ENCODE measurements at regions of chr13 and their contacts with region 1.

Region 1: DNA sequence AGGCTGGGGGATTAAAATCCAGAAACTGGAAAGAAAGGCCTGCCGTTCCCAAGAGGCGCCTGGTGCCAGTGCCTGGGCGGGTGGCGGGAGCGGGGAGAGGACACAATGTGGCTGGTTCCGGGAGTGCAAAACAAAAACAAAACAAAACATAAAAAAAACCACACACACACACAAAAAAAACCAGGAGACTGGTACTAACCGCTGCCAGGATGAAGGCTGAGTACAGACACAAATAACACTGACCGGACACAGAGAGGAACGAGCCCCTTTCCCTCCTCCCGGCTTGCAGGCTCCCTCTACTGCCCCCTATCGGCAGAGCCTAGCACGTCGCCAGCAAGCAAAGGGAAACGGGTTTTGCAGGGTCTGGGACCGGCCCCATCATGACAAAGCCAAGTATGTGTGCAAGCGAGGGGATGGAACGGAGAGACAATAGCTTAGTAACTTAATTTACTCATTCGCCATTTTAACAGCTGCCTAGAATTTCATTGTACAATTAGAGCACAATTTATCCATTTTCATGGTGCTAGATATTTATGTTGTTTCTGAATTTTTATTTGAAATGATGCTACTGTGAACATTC is 17.9 kb upstream of the ZDHHC20 start:
- DNase-seq: peak; percentile 37
- H3K4me3 ChIP-seq: peak overlapping the region; percentile 47
- H3K27ac ChIP-seq: no peak overlapping the region
- H3K27me3 ChIP-seq: peaks cover 3% of the 10 kb centered on the region
- CTCF ChIP-seq: peak; percentile 97

Region 2: DNA sequence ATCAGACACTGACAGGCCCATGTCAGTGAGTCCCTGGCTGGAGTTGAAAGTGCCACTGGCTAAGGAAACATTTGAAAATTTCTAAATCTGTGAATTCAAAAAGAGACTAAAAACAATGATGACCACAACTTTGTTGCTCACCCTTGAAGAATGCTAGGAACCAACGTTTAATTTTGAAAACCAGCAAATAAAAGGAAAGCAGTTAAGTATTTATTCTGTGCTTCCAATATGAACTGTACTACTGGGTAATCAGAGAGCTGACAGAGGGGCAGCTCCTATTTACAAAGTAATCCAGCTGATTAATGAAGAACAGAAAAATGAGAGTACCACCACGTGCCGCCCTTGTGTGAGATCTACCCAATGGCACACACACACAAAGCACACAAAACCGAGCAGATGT is 370.9 kb before region 1 on chr13:
- CTCF ChIA-PET with region 1: interaction called, 16 read pairs
- POLR2A ChIA-PET with region 1: no interaction called
- DNase-seq: peak; percentile 32
- H3K4me3 ChIP-seq: no peak overlapping the region
- H3K27ac ChIP-seq: peak overlapping the region; percentile 76
- H3K27me3 ChIP-seq: no peaks in the 10 kb centered on the region
- CTCF ChIP-seq: no peak

Region 3: GRCh38 chr13:21176220-21176982 is 300.6 kb before region 1 on chr13 and contains the starts of genes MRPL57 and SKA3:
- CTCF ChIA-PET with region 1: interaction called, 37 read pairs
- POLR2A ChIA-PET with region 1: no interaction called
- DNase-seq: peak; percentile 87
- H3K4me3 ChIP-seq: peak within 1 kb of the TSS; percentile 86
- H3K27ac ChIP-seq: peak within 1 kb of the TSS; percentile 87
- H3K27me3 ChIP-seq: no peaks in the 10 kb centered on the region
- CTCF ChIP-seq: no peak
- polyA plus RNA-seq, gene MRPL57: 14.6 and 15.6 TPM in 2 replicates
- polyA plus RNA-seq, gene SKA3: 4.3 and 7.3 TPM in 2 replicates

Region 4: GRCh38 chr13:21259576-21260455 is 217.2 kb before region 1 on chr13:
- CTCF ChIA-PET with region 1: interaction called, 13 read pairs
- POLR2A ChIA-PET with region 1: no interaction called
- DNase-seq: no peak
- H3K4me3 ChIP-seq: no peak overlapping the region
- H3K27ac ChIP-seq: no peak overlapping the region
- H3K27me3 ChIP-seq: peaks cover 14% of the 10 kb centered on the region
- CTCF ChIP-seq: no peak

Region 5: DNA sequence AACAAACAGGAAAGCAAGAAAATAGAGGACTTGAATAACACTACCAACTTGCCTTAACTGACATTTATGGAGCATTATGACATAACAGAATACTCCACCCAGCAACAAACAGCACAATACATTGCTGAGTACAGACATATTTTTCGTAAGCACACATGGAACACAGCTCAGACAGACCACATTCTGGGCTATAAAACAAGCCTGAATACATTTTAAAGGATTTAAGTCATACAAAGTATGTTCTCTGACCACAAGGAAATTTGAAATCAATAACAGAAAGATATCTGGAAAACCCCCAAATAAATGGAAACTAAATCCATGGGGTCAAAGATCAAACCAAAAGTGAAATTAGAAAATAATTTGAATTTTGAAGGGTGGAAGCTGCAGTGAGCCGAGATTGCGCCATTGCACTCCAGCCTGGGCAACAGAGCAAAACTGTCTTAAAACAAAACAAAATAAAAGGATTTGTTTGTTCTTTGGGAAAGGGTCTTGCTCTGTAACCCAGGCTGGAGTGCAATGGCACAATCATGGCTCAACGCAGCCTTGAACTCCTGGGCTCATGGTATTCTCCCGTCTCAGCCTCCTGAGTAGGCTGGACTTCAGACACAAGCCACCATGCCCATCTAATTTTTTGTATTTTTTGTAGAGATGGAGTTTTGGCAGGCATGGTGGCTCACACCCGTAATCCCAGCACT is 23.4 kb before region 1 on chr13:
- CTCF ChIA-PET with region 1: interaction called, 37 read pairs
- POLR2A ChIA-PET with region 1: no interaction called
- DNase-seq: no peak
- H3K4me3 ChIP-seq: no peak overlapping the region
- H3K27ac ChIP-seq: no peak overlapping the region
- H3K27me3 ChIP-seq: no peaks in the 10 kb centered on the region
- CTCF ChIP-seq: no peak

Region 6: GRCh38 chr13:21466527-21466926 is 10.5 kb before region 1 on chr13:
- CTCF ChIA-PET with region 1: interaction called, 37 read pairs
- POLR2A ChIA-PET with region 1: no interaction called
- DNase-seq: no peak
- H3K4me3 ChIP-seq: no peak overlapping the region
- H3K27ac ChIP-seq: no peak overlapping the region
- H3K27me3 ChIP-seq: peaks cover 5% of the 10 kb centered on the region
- CTCF ChIP-seq: no peak

Region 7: GRCh38 chr13:21595546-21595822 is 118.5 kb after region 1 on chr13:
- CTCF ChIA-PET with region 1: no interaction called
- POLR2A ChIA-PET with region 1: no interaction called
- DNase-seq: no peak
- H3K4me3 ChIP-seq: no peak overlapping the region
- H3K27ac ChIP-seq: no peak overlapping the region
- H3K27me3 ChIP-seq: no peaks in the 10 kb centered on the region
- CTCF ChIP-seq: no peak

Measured in AG04450 (cell line).